ENCODE measurements at regions of chr10 and their contacts with region 1.

Region 1: GRCh38 chr10:115355162-115355760 is 262.1 kb downstream of the ATRNL1 start:
- DNase-seq: peak; percentile 73
- H3K4me3 Mint-ChIP-seq: no peak overlapping the region
- H3K27ac Mint-ChIP-seq: no peak overlapping the region
- H3K4me1 Mint-ChIP-seq: no peaks in the 10 kb centered on the region
- H3K27me3 Mint-ChIP-seq: no peaks in the 10 kb centered on the region

Region 2: DNA sequence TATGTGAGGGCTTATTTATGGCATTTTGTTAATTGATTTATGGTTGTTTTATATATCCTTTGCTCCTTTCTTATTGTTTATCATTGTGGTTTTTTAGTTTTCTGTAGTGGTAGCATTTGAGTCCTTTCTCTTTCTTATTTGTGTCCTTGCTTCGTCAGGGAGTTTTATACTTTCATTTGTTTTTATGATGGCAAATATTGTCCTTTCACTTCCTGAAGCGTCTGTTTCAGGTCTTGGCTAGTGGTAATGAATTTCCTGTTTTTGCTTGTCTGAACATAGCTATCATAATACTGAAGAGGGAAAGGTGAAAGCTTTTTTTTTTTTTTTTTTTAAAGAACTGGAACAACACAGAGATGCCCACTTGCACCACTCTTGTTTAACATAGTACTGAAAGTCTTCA is 33.9 kb before region 1 on chr10:
- intact Hi-C with region 1: no loop called
- DNase-seq: no peak
- H3K4me3 Mint-ChIP-seq: no peak overlapping the region
- H3K27ac Mint-ChIP-seq: no peak overlapping the region
- H3K4me1 Mint-ChIP-seq: peaks cover 3% of the 10 kb centered on the region
- H3K27me3 Mint-ChIP-seq: no peaks in the 10 kb centered on the region

Region 3: GRCh38 chr10:116385994-116386809 is 1030.9 kb after region 1 on chr10:
- intact Hi-C with region 1: loop called (anchors 2 kb)
- DNase-seq: no peak
- H3K4me3 Mint-ChIP-seq: no peak overlapping the region
- H3K27ac Mint-ChIP-seq: no peak overlapping the region
- H3K4me1 Mint-ChIP-seq: no peaks in the 10 kb centered on the region
- H3K27me3 Mint-ChIP-seq: no peaks in the 10 kb centered on the region